Posterior cingulate gyrus (tissue), 11 donors: ENCODE measurements at regions of chr6 and their contacts with region 1.

Region 1: DNA sequence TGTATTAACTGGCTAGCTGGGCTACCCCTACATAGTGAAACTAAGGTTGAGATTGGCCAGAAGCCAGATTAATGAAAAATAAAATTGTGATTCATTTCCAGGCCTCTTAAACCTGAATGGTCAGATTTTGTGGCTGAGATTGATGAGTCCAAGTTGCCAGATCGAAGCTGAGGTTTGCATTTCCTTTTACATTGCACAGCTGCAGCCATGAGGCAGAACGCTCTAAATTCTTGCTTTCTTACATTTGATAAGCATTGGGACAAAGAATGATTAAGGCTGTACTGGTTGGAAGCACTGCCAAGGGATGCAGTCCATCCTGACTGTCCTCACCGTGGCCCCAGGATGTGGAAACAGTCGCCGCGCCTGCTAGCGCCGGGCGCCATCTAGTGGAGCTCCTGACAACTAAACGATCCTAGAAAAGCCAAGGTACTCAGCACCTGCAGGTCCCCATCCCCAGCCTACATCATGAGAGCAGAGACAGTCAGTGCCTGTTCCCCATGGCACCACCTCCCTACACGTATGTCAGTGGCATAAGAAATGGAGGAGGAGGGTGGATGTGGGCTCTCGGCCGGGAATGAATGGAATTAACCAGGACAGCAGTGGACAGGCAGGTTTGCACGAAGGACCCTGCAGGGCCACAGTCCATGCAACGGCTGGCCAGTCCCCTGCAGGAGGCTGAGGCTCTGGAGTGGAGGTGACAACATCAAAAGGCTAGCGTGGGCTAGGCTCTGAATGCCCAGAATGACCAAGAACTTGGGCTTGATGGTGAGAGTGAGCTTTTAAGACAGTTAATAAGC is 19.0 kb downstream of the PXDC1 start:
- DNase-seq: peak; percentile 66 to 97 (median 84)

Region 2: DNA sequence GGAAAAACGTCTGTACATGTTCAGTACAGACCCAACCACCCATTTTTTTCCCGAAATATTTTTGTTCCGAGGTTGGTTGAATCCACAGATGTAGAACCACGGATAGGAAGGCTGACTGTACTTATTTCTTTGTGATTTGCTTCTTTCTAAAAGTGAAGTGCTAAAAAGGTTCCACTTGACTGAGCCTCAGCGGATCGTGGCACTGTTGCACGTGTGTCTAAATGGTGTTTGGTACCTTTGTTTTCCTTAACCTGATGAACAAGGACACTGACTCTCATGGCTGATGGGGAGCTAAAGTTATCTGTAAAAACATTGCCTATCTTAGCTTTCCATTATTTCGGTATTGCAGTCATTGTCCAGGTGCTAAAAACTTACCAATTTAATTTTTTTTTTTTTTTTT is 607.9 kb before region 1 on chr6:
- intact Hi-C with region 1: loop called (anchors 5 kb)
- DNase-seq: no peak

Region 3: GRCh38 chr6:3281631-3282475 is 450.7 kb before region 1 on chr6:
- intact Hi-C with region 1: loop called (anchors 1 kb)
- DNase-seq: peak in 4 of 10 donors; percentile 8 to 81 (median 46)

Region 4: DNA sequence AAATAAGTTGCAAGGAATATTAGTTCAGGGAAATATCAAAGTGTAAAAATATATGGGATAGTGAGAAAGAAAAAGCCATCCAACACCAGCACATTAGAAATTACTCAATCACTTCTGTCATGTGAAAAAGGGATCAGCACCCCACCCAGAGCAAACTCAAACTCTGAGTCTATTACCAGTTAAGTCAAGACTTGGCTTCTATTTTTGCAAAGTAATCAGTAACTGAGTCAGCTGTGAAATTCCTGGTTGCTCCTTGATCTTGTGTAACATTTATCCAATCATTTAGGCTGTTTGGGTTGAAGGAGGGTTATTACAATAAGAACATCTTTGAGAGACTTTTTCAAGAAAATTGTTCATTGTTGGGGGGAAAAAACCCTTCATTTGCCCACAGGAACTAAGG is 326.9 kb before region 1 on chr6:
- intact Hi-C with region 1: loop called (anchors 5 kb)
- DNase-seq: no peak

Region 5: GRCh38 chr6:3456755-3457466 is 275.6 kb before region 1 on chr6 and contains the start of gene SLC22A23:
- intact Hi-C with region 1: loop called (anchors 10 kb)
- DNase-seq: peak; percentile 53 to 95 (median 72)

Region 6: GRCh38 chr6:3808759-3809514 is 76.4 kb after region 1 on chr6:
- intact Hi-C with region 1: no loop called
- DNase-seq: peak in 3 of 10 donors; percentile 42 to 79 (median 43)

Region 7: DNA sequence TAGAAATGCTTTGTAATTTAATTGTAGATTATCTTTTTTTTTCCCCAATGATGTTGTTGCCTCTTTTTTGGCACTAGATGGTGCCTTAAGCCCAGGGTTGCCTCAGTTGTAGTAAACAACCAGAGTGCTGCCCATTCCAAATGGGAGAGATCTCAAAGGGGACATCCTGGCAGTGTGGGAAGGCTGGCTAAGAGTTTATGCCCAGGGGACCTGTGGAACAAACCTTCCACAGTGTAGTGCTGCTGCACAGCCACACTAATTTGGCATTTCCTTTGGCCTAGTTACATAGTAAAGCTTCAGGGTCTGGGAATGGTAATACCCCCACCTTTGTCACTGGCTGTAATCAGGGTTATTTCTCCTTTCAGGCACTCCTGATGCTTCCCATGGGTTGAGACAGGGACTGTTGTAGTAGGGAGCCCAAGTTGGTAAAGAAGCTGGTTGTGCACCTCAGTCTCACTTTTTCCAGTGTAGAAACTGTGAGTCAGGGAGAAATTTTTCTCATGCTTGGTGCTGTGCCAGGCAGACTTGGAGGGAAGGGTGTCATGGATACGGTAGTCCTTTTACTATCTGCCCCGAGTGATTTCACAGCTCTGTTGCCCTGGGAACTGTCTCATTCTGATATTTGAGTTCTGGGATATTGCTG is 580.6 kb after region 1 on chr6:
- intact Hi-C with region 1: no loop called
- DNase-seq: no peak